Activated B cell treated with CpG ODN at 0.5 μM for 24 hours (primary cell): ENCODE measurements at regions of chr1 and their contacts with region 1.

Region 1: DNA sequence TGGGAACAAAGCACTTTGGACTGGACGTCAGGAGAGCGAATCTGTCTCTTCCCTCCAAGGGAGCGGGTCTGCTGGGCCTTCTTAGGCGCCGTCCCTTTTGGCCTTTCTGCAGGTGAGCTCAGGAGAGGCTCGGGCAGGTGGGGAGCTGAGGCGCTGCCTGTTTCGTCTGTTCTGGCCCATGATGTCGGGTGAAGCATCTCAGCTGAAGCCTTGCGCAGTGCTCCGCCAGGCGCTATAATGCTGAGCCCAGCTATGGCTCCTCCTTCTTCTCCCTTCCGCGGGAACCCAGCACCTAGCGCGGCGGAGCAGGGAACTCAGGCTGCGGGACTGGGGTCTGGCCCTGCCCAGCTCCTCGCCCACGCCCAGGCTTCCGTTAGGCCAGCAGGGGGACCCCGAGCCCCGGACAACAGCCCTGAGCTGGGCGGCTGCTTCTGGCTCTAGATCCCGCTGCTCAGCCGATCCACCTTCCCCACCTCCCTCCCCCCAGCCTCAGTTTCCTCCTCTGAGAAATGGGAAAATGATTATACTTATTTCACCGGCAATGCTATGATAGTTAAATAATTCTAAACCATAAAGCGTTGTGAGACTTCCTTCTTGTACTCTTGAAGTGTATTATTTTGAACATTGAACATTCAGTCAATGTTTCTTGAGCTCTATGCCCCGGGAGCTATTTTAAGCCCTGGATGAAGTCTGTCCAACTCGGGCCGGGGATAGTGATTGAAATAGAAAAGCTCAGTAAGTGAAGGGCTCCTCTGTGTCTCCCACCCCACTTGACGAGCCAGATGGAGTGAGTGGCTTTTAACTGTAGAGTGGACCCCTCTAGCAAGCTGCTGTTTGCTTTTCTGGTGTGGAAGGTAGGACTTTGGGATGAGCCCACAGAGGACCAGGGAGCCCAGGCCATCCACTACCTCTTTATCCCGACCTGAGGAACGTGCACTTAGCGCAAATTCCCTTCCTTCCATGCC is 9.6 kb upstream of the ADORA1 start:
- DNase-seq: no peak
- ATAC-seq: peak; percentile 60
- H3K4me3 Mint-ChIP-seq: no peak overlapping the region
- H3K27ac Mint-ChIP-seq: no peak overlapping the region
- H3K4me1 Mint-ChIP-seq: peaks cover 2% of the 10 kb centered on the region
- H3K27me3 Mint-ChIP-seq: peaks cover 49% of the 10 kb centered on the region
- CTCF ChIP-seq: no peak

Region 2: GRCh38 chr1:202861420-202862200 is 256.3 kb before region 1 on chr1:
- CTCF ChIA-PET with region 1: no interaction called
- POLR2A ChIA-PET with region 1: no interaction called
- intact Hi-C with region 1: no loop called
- DNase-seq: peak; percentile 50
- ATAC-seq: peak; percentile 96
- H3K4me3 Mint-ChIP-seq: peak overlapping the region; percentile 89
- H3K27ac Mint-ChIP-seq: peak overlapping the region; percentile 3
- H3K4me1 Mint-ChIP-seq: peaks cover 13% of the 10 kb centered on the region
- H3K27me3 Mint-ChIP-seq: peaks cover 14% of the 10 kb centered on the region
- CTCF ChIP-seq: no peak

Region 3: DNA sequence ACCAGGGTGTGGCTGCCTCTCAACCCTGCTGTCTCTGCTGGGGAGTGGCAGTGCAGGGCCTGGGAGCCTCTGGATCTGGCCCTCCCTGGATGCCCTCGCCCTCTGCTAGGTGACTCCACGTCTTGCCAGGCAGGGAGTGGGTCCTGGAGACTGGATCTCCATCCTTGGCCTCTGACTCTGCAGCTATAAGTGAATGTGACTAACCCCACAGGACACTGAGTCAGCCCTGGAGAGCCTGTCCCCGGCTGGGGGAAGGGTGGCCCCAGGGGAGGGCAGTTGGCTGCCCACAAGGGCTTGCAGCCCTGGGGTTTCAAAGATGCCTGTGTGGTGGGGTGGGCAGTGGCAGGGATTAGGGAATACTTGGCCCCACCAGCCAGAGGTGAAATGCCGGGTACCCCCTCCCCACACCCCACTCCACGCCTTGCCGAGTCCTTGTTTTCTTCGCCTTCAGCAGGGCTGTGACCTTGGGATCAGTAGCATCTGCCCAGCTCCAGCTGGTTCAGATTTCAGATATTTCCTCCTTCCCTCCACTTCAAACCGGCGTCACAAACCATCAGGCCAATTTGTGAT is 59.7 kb after region 1 on chr1:
- CTCF ChIA-PET with region 1: no interaction called
- POLR2A ChIA-PET with region 1: no interaction called
- intact Hi-C with region 1: no loop called
- DNase-seq: no peak
- ATAC-seq: no peak
- H3K4me3 Mint-ChIP-seq: no peak overlapping the region
- H3K27ac Mint-ChIP-seq: no peak overlapping the region
- H3K4me1 Mint-ChIP-seq: peaks cover 6% of the 10 kb centered on the region
- H3K27me3 Mint-ChIP-seq: peaks cover 20% of the 10 kb centered on the region
- CTCF ChIP-seq: no peak

Region 4: GRCh38 chr1:203216274-203217138 is 98.6 kb after region 1 on chr1:
- CTCF ChIA-PET with region 1: interaction called, 25 read pairs
- POLR2A ChIA-PET with region 1: no interaction called
- intact Hi-C with region 1: loop called (anchors 1 kb)
- DNase-seq: no peak
- ATAC-seq: no peak
- H3K4me3 Mint-ChIP-seq: no peak overlapping the region
- H3K27ac Mint-ChIP-seq: no peak overlapping the region
- H3K4me1 Mint-ChIP-seq: peaks cover 4% of the 10 kb centered on the region
- H3K27me3 Mint-ChIP-seq: peaks cover 15% of the 10 kb centered on the region
- CTCF ChIP-seq: peak; percentile 42

Region 5: GRCh38 chr1:203486618-203487370 is 368.9 kb after region 1 on chr1:
- CTCF ChIA-PET with region 1: interaction called, 3 read pairs
- POLR2A ChIA-PET with region 1: no interaction called
- intact Hi-C with region 1: loop called (anchors 1 kb)
- DNase-seq: no peak
- ATAC-seq: no peak
- H3K4me3 Mint-ChIP-seq: peak overlapping the region; percentile 83
- H3K27ac Mint-ChIP-seq: no peak overlapping the region
- H3K4me1 Mint-ChIP-seq: peaks cover 5% of the 10 kb centered on the region
- H3K27me3 Mint-ChIP-seq: peaks cover 2% of the 10 kb centered on the region
- CTCF ChIP-seq: no peak